AG04450 (cell line): ENCODE measurements at regions of chr19 and their contacts with region 1.

Region 1: DNA sequence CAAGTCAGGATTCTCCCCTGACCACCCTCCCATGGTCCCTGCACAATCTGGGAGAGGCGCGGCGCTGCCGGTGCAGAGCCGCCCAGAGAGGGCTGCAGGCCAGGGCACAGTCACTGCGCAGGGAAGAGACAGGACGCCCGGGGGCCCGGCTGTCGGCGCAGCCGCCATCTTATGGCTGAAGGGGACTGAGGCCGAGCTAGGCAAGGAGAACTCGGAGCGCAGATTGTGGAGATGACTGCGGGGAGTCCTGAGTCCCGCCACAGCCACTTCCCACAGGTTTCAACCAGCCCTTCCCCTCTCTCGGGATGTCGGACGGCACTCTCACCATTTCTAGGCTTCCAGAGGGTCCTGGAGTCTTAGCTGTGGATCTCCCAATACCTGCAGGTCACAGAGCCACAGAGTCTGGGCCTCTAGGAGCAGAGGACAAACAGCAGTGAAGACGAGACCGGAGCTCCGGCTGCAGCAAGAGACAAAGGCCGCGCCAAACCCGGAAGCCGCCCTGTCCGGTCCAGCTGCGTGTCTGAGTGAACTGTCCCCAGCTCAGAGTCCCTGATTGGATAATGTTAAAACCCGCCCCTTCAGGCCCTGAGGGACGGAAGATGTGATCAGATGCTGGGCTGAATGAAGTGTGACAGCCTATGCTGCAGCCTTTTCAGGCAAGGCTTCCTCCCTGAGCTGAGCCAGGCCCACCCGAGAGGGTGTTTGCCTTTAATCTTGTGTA is at the start of gene ZNF708:
- DNase-seq: peak; percentile 67
- H3K4me3 ChIP-seq: peak within 1 kb of the TSS; percentile 94
- H3K27ac ChIP-seq: peak within 1 kb of the TSS; percentile 98
- H3K27me3 ChIP-seq: no peaks in the 10 kb centered on the region
- CTCF ChIP-seq: no peak
- polyA plus RNA-seq, gene ZNF708: 3.1 and 4.4 TPM in 2 replicates

Region 2: GRCh38 chr19:21314676-21315075 is 14.4 kb before region 1 on chr19:
- CTCF ChIA-PET with region 1: no interaction called
- POLR2A ChIA-PET with region 1: no interaction called
- DNase-seq: no peak
- H3K4me3 ChIP-seq: no peak overlapping the region
- H3K27ac ChIP-seq: no peak overlapping the region
- H3K27me3 ChIP-seq: no peaks in the 10 kb centered on the region
- CTCF ChIP-seq: no peak

Region 3: DNA sequence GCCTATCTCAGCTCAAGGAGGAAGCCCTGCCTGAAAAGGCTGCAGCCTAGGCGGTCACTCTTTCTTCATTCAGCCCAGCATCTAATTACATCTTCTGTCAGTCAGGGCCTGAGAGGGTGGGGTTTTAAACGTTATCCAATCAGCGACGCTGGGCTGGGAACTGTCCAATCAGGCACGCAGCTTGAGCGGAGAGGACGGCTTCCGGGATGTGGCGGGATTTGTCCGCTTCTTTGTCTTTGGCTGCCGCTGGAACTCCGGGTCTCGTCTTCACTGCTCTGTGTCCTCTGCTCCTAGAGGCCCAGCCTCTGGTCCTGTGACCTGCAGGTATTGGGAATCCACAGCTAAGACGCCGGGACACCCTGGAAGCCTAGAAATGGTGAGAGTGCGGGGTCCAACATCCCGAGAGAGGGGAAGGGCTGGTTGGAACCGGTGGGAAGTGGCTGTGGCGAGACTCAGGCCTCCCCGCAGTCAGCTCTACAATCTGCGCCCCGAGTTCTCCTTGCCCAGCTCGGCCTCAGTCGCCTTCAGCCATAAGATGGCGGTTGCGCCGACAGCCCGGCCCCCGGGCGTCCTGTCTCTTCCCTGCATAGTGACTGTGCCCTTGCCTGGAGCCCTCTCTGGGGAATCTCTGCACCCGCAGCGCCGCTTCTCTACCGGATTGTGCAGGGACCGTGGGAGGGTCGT is 29.9 kb after region 1 on chr19 and contains the start of gene ZNF738:
- CTCF ChIA-PET with region 1: no interaction called
- POLR2A ChIA-PET with region 1: interaction called, 25 read pairs
- DNase-seq: peak; percentile 84
- H3K4me3 ChIP-seq: peak within 1 kb of the TSS; percentile 88
- H3K27ac ChIP-seq: peak within 1 kb of the TSS; percentile 91
- H3K27me3 ChIP-seq: no peaks in the 10 kb centered on the region
- CTCF ChIP-seq: no peak
- polyA plus RNA-seq, gene ZNF738: 5.3 and 8.2 TPM in 2 replicates

Region 4: GRCh38 chr19:21383980-21384582 is 55.0 kb after region 1 on chr19:
- CTCF ChIA-PET with region 1: no interaction called
- POLR2A ChIA-PET with region 1: no interaction called
- DNase-seq: no peak
- H3K4me3 ChIP-seq: no peak overlapping the region
- H3K27ac ChIP-seq: no peak overlapping the region
- H3K27me3 ChIP-seq: no peaks in the 10 kb centered on the region
- CTCF ChIP-seq: no peak

Region 5: DNA sequence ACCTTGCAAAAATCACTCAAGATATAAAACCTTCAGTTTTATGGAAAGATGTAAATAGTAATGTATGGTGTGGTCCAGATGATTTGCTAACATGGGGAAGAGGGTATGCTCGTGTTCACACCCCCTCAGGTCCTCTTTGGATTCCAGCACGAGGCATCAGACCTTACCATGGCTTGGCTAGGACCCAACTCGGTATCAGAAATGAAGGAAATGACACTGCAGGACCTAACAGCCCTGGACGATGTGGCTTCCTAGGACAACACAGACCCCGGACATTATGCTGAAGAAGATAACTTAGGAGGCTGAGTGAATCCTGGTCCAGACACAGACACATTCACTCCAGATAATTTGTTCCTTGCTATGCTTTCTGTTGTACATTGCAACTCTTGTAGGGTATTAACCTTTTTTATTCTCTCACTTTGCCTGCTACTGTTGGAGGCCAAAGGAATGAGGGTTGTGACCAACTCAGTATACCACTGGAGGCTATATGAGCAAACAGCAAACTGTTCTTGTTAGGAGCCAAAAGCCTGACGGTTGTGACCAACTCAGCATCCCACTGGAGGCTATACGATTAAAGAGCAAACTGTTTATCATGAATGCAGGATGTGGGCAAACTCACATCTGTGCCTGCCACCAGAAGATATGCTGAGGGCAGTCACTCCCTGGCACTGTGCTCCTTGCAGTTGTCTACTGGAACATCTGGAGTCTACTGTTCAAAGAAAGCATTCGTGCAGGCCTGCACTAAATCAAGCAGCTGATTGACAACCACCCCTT is 298.1 kb after region 1 on chr19:
- CTCF ChIA-PET with region 1: no interaction called
- POLR2A ChIA-PET with region 1: no interaction called
- DNase-seq: no peak
- H3K4me3 ChIP-seq: no peak overlapping the region
- H3K27ac ChIP-seq: no peak overlapping the region
- H3K27me3 ChIP-seq: no peaks in the 10 kb centered on the region
- CTCF ChIP-seq: no peak